ENCODE measurements at regions of chr7 and their contacts with region 1.

Region 1: DNA sequence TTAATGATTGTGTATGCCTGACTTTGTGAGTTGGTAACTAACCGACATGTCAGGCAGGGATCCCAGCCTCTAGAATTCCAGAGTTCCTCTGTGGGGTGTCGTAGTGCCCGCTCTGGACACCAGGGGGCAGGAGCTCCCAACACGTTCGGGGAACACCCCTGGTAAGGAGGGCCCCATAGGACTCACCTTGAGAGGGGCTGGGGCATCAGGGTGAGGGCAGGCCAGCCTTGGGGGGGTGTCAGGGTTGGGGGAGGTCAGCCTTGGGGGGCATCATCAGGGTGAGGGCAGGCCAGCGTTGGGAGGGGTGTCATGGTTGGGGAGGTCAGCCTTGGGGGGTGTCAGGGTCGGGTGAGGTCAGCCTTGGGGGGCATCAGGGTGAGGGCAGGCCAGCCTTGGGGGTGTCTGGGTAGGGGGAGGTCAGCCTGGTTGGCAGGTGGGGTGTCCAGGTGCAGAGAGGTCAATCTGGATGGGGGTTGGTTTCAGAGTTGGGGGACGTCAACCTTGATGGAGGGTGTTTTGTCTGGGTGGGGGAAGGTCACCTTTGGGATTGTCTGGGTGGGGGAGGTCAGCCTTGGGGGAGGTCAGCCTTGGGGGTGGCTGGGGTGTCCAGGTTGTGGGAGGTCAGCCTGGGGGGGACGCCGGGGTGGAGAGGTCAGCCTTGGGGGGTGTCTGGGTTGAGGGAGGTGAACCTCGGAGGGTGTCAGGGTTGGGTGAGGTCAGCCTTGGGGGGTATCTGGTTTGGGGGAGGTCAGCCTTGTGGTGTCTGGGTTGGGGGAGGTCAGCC is 45.6 kb upstream of the SUN1 start:
- DNase-seq: peak in 2 of 3 donors; percentile 67 to 76
- ATAC-seq: peak; percentile 90 to 97 (median 96)
- H3K4me3 ChIP-seq: no peak overlapping the region
- H3K27ac ChIP-seq: no peak overlapping the region
- H3K4me1 ChIP-seq: no peaks in the 10 kb centered on the region
- H3K27me3 ChIP-seq: no peaks in the 10 kb centered on the region
- CTCF ChIP-seq: peak; percentile 74 to 82 (median 79)
- POLR2A ChIP-seq: no peak

Region 2: DNA sequence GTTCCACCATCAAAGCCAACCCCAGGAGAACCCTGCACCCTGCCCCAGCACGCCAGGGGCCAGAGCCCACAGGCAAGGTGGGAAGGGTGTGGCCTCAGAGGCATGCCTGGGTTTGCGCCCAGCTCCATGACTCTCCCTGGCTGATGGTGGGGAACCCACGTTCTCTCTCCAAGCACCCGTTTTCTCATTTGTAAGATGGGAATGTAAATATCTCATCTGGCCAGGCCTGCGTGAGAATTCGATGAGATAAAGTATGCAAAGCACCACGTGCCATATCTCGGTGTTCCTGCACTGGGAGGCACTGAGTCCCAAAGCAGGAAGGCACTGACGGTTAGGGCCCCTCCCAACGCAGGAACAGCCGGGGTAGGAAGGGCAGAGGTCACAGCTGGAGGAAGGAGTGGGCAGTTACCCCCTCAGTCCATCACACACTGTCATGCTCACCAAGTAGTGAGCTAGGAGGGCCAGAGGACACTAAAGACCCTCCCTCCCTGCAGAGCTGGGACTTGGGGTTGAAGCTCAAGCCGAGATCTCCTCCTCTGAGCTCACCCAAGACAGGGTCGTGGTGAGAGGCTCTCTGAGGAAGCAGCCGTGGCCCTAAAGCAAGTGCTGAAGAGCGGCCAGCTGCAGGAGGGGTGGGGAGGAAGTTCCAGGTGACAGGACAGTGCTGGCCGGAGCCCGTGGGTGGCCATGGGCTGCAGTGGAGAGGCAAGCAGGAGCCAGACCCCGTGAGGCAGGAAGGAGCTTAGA is 87.4 kb before region 1 on chr7:
- intact Hi-C with region 1: no loop called
- DNase-seq: peak in 1 of 3 donors; percentile 27
- ATAC-seq: peak; percentile 54 to 78 (median 70)
- H3K4me3 ChIP-seq: no peak overlapping the region
- H3K27ac ChIP-seq: no peak overlapping the region
- H3K4me1 ChIP-seq: no peaks in the 10 kb centered on the region
- H3K27me3 ChIP-seq: no peaks in the 10 kb centered on the region
- CTCF ChIP-seq: no peak
- POLR2A ChIP-seq: no peak

Region 3: DNA sequence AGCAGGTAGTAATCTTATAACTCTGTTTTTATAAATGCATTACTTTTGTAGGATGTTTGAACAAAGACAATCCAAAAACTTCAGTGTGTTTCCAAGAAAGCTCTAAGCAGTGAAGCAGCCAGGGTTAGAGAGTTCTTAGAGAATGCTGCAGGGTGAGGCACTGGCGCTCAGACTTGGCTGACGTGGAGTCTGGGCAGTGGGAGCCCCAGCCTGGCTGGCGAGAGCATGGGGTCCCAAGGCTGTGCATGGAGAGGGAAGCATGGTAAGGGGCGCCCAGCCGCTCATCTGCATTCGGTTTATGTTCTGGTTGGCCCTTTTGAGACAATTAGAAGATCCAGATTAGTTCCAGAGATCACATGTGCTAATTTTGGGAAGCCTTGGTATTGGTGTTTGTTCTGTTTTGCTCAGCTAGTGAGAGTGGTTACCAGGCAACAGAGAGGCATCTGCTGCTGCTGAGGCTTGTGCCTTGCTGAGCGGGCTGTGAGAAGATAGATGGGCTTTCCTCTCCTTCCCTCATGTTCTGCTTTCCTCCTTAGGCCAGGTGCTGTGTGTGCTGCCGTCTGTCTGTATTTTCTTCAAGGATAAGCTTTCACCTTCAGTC is 55.9 kb after region 1 on chr7:
- intact Hi-C with region 1: loop called in 1 of 2 experiments (anchors 10 kb)
- DNase-seq: no peak
- ATAC-seq: no peak
- H3K4me3 ChIP-seq: no peak overlapping the region
- H3K27ac ChIP-seq: no peak overlapping the region
- H3K4me1 ChIP-seq: no peaks in the 10 kb centered on the region
- H3K27me3 ChIP-seq: no peaks in the 10 kb centered on the region
- CTCF ChIP-seq: no peak
- POLR2A ChIP-seq: no peak

Region 4: GRCh38 chr7:873367-874002 is 86.8 kb after region 1 on chr7:
- intact Hi-C with region 1: loop called in 1 of 2 experiments (anchors 5 kb)
- DNase-seq: peak; percentile 86 to 91 (median 90)
- ATAC-seq: peak; percentile 70 to 76 (median 74)
- H3K4me3 ChIP-seq: no peak overlapping the region
- H3K27ac ChIP-seq: peak overlapping the region; percentile 50 to 92 (median 60)
- H3K4me1 ChIP-seq: peaks cover 0 to 19% (median 8%) of the 10 kb centered on the region in 4 donors
- H3K27me3 ChIP-seq: no peaks in the 10 kb centered on the region
- CTCF ChIP-seq: peak; percentile 96 to 99 (median 98)
- POLR2A ChIP-seq: peak; percentile 51